ENCODE measurements at regions of chr2 and their contacts with region 1.

Region 1: DNA sequence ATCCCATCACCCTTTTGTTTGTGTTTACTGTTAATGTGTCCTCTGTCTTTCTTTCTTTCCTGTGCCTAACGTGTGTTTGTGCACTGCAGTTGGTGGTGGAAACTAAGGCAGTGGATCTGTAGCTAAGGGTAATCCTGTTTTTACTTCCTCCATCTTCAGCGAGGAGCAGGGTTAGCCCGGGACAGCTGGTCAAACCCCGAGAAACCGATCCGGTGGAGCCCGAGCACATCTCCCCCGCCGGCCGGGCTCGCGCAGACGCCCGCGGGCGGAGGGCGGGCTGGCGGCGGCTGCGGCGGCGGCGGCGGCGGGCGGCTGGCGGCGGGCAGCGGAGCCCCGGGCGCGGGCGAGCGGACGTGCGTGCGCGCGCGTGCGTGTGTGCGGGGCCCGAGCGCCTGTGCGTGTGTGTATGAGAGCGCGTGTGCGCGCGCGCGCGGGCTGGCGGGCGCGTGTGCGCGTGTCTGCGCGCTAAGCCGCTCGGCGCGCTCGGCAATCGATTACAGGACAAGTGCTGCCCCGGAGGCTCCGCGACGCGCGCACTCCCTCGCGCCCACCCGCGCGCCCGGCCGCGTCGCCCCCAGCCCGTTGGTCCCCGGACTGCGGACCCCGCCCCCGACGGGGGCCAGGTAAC is at the start of gene IKZF2:
- DNase-seq: peak; percentile 58 to 85 (median 69)
- ATAC-seq: peak; percentile 86
- H3K4me3 ChIP-seq: peak within 1 kb of the TSS; percentile 69
- H3K4me3 Mint-ChIP-seq: peak within 1 kb of the TSS; percentile 83 to 96 (median 92)
- H3K27ac ChIP-seq: peak within 1 kb of the TSS; percentile 73
- H3K27ac Mint-ChIP-seq: peak within 1 kb of the TSS; percentile 71 to 92 (median 83)
- H3K4me1 ChIP-seq: no peaks in the 10 kb centered on the region
- H3K4me1 Mint-ChIP-seq: peaks cover 6 to 47% (median 36%) of the 10 kb centered on the region in 7 donors
- H3K27me3 ChIP-seq: peaks cover 0 to 4% of the 10 kb centered on the region in 2 donors
- H3K27me3 Mint-ChIP-seq: peaks cover 41 to 70% (median 50%) of the 10 kb centered on the region in 5 donors
- total RNA-seq, gene IKZF2: 3.4 to 23.4 (median 7.3) TPM

Region 2: GRCh38 chr2:212777020-212777491 is 374.5 kb before region 1 on chr2:
- CTCF ChIA-PET with region 1: interaction called, 17 read pairs
- POLR2A ChIA-PET with region 1: no interaction called
- intact Hi-C with region 1: loop called in 1 of 2 experiments (anchors 1 kb)
- DNase-seq: peak in 6 of 9 donors; percentile 6 to 46 (median 18)
- ATAC-seq: peak; percentile 54
- H3K4me3 ChIP-seq: no peak overlapping the region
- H3K4me3 Mint-ChIP-seq: peak overlapping the region in 1 of 10 donors; percentile 37
- H3K27ac ChIP-seq: no peak overlapping the region
- H3K27ac Mint-ChIP-seq: no peak overlapping the region
- H3K4me1 ChIP-seq: no peaks in the 10 kb centered on the region
- H3K4me1 Mint-ChIP-seq: peaks cover 0 to 5% (median 0%) of the 10 kb centered on the region in 7 donors
- H3K27me3 ChIP-seq: no peaks in the 10 kb centered on the region
- H3K27me3 Mint-ChIP-seq: no peaks in the 10 kb centered on the region

Region 3: DNA sequence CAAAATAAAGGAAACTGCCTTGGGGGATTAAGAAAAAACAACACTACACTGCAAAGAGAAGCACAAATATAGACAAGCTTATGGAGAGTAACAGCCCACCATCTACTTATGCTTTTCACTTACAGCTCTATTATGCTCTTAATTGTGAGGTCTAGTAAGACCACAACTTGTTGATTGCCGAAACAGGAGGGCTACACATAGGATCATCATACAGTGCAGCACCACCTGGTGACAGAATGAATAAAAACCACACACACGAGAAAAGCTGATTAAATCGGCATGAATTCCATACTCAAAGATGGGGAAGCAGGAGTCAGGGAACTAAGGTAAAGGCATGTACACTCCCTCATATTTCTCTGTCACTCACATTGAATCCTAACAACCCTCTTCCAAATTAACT is 259.4 kb before region 1 on chr2:
- CTCF ChIA-PET with region 1: no interaction called
- POLR2A ChIA-PET with region 1: no interaction called
- intact Hi-C with region 1: loop called in 1 of 2 experiments (anchors 10 kb)
- DNase-seq: no peak
- ATAC-seq: peak; percentile 26
- H3K4me3 ChIP-seq: no peak overlapping the region
- H3K4me3 Mint-ChIP-seq: no peak overlapping the region
- H3K27ac ChIP-seq: no peak overlapping the region
- H3K27ac Mint-ChIP-seq: no peak overlapping the region
- H3K4me1 ChIP-seq: no peaks in the 10 kb centered on the region
- H3K4me1 Mint-ChIP-seq: peaks cover 0 to 4% (median 0%) of the 10 kb centered on the region in 7 donors
- H3K27me3 ChIP-seq: no peaks in the 10 kb centered on the region
- H3K27me3 Mint-ChIP-seq: no peaks in the 10 kb centered on the region

Region 4: DNA sequence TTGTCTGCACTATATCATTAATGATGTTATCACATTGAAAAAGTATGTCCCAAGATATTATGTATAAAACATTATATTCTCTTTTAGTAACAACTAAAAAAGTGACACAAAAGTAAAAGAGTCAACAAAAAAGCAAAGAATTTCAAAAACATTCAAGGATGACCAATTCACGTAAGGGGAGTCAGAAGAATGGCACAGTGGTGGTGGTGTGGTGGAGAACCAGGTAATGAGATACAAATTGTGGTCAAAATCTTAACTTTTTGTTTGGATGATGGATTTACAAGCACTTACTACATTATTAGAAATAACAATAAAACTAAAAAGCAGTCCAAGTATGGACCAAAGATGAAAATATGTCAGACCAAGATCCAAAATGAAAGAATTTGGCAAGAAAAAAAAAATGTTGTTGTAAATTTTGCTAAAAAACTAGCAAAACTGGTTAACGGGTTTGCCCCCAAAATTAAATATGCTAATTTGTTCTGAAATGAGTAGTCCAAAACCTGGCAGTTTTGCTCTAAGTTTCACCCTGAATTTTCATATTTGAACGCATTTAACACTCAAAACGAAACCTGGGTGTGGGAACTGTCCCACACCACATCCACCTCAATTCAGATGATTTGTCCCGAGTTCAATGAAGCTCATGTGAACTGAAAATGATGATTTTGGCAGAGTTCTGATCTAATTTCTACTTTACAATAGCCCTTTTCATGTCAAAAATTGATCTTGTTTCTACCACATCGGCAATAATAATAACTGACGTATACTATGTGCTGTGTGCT is 136.0 kb before region 1 on chr2:
- CTCF ChIA-PET with region 1: no interaction called
- POLR2A ChIA-PET with region 1: no interaction called
- intact Hi-C with region 1: loop called in 1 of 2 experiments (anchors 5 kb)
- DNase-seq: peak in 1 of 9 donors; percentile 46
- ATAC-seq: peak; percentile 18
- H3K4me3 ChIP-seq: no peak overlapping the region
- H3K4me3 Mint-ChIP-seq: peak overlapping the region in 2 of 10 donors; percentile 9 to 23
- H3K27ac ChIP-seq: no peak overlapping the region
- H3K27ac Mint-ChIP-seq: peak overlapping the region in 1 of 9 donors; percentile 55
- H3K4me1 ChIP-seq: peaks cover 0 to 13% of the 10 kb centered on the region in 2 donors
- H3K4me1 Mint-ChIP-seq: peaks cover 0 to 24% (median 0%) of the 10 kb centered on the region in 7 donors
- H3K27me3 ChIP-seq: no peaks in the 10 kb centered on the region
- H3K27me3 Mint-ChIP-seq: peaks cover 0 to 32% (median 0%) of the 10 kb centered on the region in 5 donors

Region 5: GRCh38 chr2:213238753-213239495 is 87.4 kb after region 1 on chr2:
- CTCF ChIA-PET with region 1: no interaction called
- POLR2A ChIA-PET with region 1: interaction called, 3 read pairs
- intact Hi-C with region 1: loop called in 1 of 2 experiments (anchors 5 kb)
- DNase-seq: no peak
- ATAC-seq: no peak
- H3K4me3 ChIP-seq: no peak overlapping the region
- H3K4me3 Mint-ChIP-seq: peak overlapping the region in 5 of 10 donors; percentile 10 to 42 (median 21)
- H3K27ac ChIP-seq: no peak overlapping the region
- H3K27ac Mint-ChIP-seq: peak overlapping the region in 5 of 9 donors; percentile 13 to 64 (median 34)
- H3K4me1 ChIP-seq: no peaks in the 10 kb centered on the region
- H3K4me1 Mint-ChIP-seq: peaks cover 0 to 28% (median 7%) of the 10 kb centered on the region in 7 donors
- H3K27me3 ChIP-seq: no peaks in the 10 kb centered on the region
- H3K27me3 Mint-ChIP-seq: peaks cover 21 to 41% (median 31%) of the 10 kb centered on the region in 5 donors